Breast epithelium (tissue), 4 donors: ENCODE measurements at regions of chr4 and their contacts with region 1.

Region 1: GRCh38 chr4:47463235-47463956 is at the start of gene COMMD8:
- DNase-seq: peak; percentile 94
- H3K4me3 ChIP-seq: peak within 1 kb of the TSS; percentile 69 to 88 (median 73)
- H3K27ac ChIP-seq: peak within 1 kb of the TSS; percentile 80 to 88
- H3K4me1 ChIP-seq: no peaks in the 10 kb centered on the region
- H3K27me3 ChIP-seq: no peaks in the 10 kb centered on the region
- CTCF ChIP-seq: peak; percentile 30 to 52 (median 32)
- POLR2A ChIP-seq: no peak
- total RNA-seq, gene COMMD8: 11.8 to 12.8 (median 12.3) TPM

Region 2: DNA sequence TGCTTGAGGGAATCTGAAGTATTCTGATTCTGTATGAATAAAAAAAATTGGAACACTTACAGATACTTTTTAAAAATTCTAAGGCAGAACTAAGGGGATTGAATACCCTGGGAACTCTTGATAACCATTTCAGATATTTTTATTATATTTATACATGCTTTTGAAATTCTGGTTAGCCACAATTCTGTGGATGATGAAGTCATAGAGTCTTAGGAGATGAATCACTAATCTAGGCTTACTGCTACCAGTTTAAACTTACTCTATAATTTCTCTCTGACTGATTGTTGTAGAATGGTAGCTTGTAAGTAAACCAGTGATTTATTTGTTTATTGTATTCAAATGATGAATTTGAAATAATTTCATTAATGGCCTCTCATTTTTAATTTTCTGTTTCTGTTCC is 866.6 kb after region 1 on chr4:
- intact Hi-C with region 1: loop called (anchors 5 kb)
- DNase-seq: no peak
- H3K4me3 ChIP-seq: no peak overlapping the region
- H3K27ac ChIP-seq: no peak overlapping the region
- H3K4me1 ChIP-seq: no peaks in the 10 kb centered on the region
- H3K27me3 ChIP-seq: no peaks in the 10 kb centered on the region
- CTCF ChIP-seq: no peak
- POLR2A ChIP-seq: no peak